MCF 10A (cell line): ENCODE measurements at regions of chr4 and their contacts with region 1.

Region 1: DNA sequence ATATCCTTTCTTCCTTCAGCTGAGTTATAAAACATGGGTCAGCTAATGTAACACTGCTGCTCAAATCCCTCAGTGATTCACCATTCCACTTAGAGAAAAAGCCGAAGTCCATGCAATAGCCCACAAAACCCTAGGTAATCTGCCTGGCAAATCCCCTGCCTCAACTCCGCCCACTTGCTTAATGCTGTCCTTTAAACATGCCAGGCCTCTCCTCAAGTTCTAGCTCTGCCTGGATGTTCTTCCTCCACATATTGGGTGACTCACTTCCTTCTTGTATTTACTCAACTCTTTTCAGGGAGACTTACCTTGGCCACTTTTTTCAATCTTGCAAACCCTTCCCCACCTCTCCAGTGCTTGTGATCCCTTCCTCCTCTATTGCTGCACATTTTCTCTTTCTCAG is 89.8 kb downstream of the EMCN start:
- DNase-seq: peak; percentile 93
- H3K4me3 Mint-ChIP-seq: no peak overlapping the region
- H3K27ac Mint-ChIP-seq: peak overlapping the region; percentile 40
- H3K4me1 Mint-ChIP-seq: peaks cover 10% of the 10 kb centered on the region
- H3K27me3 Mint-ChIP-seq: no peaks in the 10 kb centered on the region
- CTCF ChIP-seq: no peak

Region 2: GRCh38 chr4:100742045-100742444 is 314.0 kb after region 1 on chr4:
- CTCF ChIA-PET with region 1: interaction called, 3 read pairs
- POLR2A ChIA-PET with region 1: interaction called, 10 read pairs
- intact Hi-C with region 1: no loop called
- DNase-seq: peak; percentile 77
- H3K4me3 Mint-ChIP-seq: no peak overlapping the region
- H3K27ac Mint-ChIP-seq: no peak overlapping the region
- H3K4me1 Mint-ChIP-seq: peaks cover 22% of the 10 kb centered on the region
- H3K27me3 Mint-ChIP-seq: no peaks in the 10 kb centered on the region
- CTCF ChIP-seq: peak; percentile 53

Region 3: GRCh38 chr4:100838286-100838685 is 410.2 kb after region 1 on chr4:
- CTCF ChIA-PET with region 1: no interaction called
- POLR2A ChIA-PET with region 1: no interaction called
- intact Hi-C with region 1: no loop called
- DNase-seq: no peak
- H3K4me3 Mint-ChIP-seq: no peak overlapping the region
- H3K27ac Mint-ChIP-seq: no peak overlapping the region
- H3K4me1 Mint-ChIP-seq: no peaks in the 10 kb centered on the region
- H3K27me3 Mint-ChIP-seq: no peaks in the 10 kb centered on the region
- CTCF ChIP-seq: no peak